ENCODE measurements at regions of chr22 and their contacts with region 1.

Region 1: DNA sequence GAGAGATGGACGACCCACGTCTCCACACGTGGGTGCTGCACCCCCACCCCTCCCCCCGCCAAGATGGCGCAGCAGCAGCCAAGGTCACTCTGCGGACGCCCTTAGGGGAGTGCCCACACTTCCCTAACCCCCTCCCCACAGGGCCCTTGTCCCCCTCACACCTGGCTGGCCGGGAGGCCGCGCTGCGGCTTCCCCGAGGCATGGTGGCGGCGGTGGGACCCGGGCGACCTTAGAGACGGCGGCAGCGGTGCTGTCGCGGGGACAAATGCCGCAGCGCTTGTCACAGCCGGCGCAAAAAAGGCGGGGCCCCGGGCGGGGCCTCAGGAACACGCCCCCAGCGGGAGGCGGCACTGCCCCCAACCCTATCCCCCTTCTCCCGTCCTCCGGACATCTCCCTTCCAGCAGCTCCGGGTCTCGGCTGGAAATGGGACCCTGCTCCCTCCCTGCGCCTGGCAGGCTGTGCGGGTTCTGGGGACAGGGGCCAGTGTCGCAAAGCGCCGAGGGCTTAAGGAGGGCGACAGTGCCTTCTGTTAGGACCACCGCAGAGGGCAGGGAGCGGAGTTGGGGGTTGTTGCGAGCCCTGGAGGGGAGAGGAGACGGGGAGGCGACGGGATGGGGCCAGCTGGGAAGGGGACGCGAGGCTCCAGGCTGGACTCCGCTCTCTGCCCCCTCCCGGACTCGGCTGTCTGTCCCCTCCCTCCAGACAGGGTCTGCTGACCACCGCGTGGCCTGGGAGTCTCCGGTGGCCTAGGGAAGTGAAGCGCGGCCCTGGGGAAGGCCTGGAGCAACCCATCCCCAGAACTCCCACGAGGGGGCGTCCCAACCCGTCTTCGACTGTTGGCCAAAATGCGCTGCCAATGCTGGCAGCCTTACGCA is at the start of gene CHCHD10:
- DNase-seq: peak; percentile 81 to 93 (median 86)
- ATAC-seq: peak; percentile 82 to 93 (median 87)
- H3K4me3 ChIP-seq: peak within 1 kb of the TSS; percentile 58 to 90 (median 77)
- H3K27ac ChIP-seq: peak within 1 kb of the TSS; percentile 54 to 73 (median 70)
- H3K4me1 ChIP-seq: peaks cover 0 to 9% (median 0%) of the 10 kb centered on the region in 3 donors
- H3K27me3 ChIP-seq: no peaks in the 10 kb centered on the region
- CTCF ChIP-seq: peak; percentile 54 to 77 (median 70)
- total RNA-seq, gene CHCHD10: 30.6 to 75.5 (median 50.6) TPM

Region 2: GRCh38 chr22:23849009-23850006 is 81.4 kb after region 1 on chr22:
- intact Hi-C with region 1: loop called in 2 of 3 experiments (anchors 5 kb)
- DNase-seq: peak; percentile 75 to 99 (median 90)
- ATAC-seq: peak; percentile 92 to 96 (median 95)
- H3K4me3 ChIP-seq: peak overlapping the region in 2 of 4 donors; percentile 18 to 34
- H3K27ac ChIP-seq: no peak overlapping the region
- H3K4me1 ChIP-seq: peaks cover 0 to 5% (median 5%) of the 10 kb centered on the region in 3 donors
- H3K27me3 ChIP-seq: no peaks in the 10 kb centered on the region
- CTCF ChIP-seq: peak; percentile 96 to 99 (median 98)

Region 3: DNA sequence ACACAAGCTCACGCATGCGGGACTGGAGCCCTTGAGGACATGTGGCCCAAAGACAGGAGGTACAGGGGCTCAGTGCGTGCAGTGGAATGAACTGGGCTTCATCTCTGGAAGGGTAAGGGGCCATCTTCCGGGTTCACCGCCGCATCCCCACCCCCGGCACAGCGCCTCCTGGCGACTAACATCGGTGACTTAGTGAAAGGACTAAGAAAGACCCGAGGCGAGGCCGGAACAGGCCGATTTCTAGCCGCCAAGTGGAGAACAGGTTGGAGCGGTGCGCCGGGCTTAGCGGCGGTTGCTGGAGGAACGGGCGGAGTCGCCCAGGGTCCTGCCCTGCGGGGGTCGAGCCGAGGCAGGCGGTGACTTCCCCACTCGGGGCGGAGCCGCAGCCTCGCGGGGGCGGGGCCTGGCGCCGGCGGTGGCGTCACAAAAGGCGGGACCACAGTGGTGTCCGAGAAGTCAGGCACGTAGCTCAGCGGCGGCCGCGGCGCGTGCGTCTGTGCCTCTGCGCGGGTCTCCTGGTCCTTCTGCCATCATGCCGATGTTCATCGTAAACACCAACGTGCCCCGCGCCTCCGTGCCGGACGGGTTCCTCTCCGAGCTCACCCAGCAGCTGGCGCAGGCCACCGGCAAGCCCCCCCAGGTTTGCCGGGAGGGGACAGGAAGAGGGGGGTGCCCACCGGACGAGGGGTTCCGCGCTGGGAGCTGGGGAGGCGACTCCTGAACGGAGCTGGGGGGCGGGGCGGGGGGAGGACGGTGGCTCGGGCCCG is 126.2 kb after region 1 on chr22 and contains the start of gene MIF:
- intact Hi-C with region 1: no loop called
- DNase-seq: peak; percentile 93 to 99 (median 98)
- ATAC-seq: peak; percentile 90 to 97 (median 92)
- H3K4me3 ChIP-seq: peak within 1 kb of the TSS; percentile 68 to 90 (median 74)
- H3K27ac ChIP-seq: peak within 1 kb of the TSS; percentile 96 to 98 (median 96)
- H3K4me1 ChIP-seq: peaks cover 0 to 10% (median 0%) of the 10 kb centered on the region in 3 donors
- H3K27me3 ChIP-seq: no peaks in the 10 kb centered on the region
- CTCF ChIP-seq: peak; percentile 51 to 64 (median 56)
- total RNA-seq, gene MIF: 128 to 269 (median 192) TPM

Region 4: DNA sequence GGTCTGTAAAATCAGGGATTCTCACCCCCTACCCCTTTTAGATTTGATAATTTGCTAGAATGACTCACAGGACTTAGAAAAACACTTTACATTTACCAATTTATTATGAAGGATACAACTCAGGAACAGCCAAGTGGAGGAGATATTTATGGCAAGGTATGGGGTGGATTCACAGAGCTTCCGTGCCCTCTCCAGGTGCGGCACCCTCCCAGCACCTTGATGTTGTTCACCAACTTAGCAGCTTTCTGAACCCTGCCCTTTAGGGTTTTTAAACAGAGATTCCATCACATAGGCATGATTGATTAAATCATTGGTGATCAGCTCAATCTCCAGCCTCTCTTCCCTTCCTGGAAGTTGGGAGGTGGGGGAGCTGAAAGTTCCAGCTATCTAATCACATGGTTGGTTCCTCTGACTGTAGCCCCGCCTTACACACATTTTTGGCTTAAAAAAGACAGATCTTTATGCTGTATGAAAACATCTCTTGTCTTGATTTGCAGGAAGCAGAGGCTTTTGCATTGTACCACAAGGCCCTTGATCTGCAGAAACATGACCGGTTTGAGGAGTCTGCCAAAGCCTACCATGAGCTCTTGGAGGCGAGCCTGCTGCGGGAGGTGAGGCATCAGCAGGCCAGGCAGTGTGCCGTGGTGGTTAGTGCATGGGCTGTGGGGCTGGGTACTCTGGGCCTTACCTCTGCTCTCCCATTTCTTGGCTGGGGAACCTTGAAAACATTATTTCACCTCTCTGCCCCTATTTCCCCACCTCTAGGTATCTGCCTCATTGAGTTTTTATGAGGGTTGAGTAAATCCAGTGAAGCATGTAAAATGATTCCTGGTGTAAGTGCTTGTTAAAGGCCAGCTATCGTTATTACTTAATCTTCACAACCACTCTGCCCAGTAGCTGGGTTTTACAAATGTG is 270.2 kb after region 1 on chr22:
- intact Hi-C with region 1: no loop called
- DNase-seq: no peak
- ATAC-seq: no peak
- H3K4me3 ChIP-seq: no peak overlapping the region
- H3K27ac ChIP-seq: no peak overlapping the region
- H3K4me1 ChIP-seq: no peaks in the 10 kb centered on the region
- H3K27me3 ChIP-seq: no peaks in the 10 kb centered on the region
- CTCF ChIP-seq: no peak

Measured in pancreas (tissue), 10 donors.